ENCODE measurements at regions of chr11 and their contacts with region 1.

Region 1: GRCh38 chr11:18395735-18396504 is 1.6 kb downstream of the LDHA start:
- DNase-seq: peak; percentile 87 to 98 (median 95)
- ATAC-seq: peak; percentile 78
- H3K4me3 ChIP-seq: peak overlapping the region; percentile 78
- H3K4me3 Mint-ChIP-seq: peak overlapping the region; percentile 96 to 99 (median 98)
- H3K27ac ChIP-seq: peak overlapping the region; percentile 95
- H3K27ac Mint-ChIP-seq: peak overlapping the region; percentile 94 to 98 (median 96)
- H3K4me1 ChIP-seq: peaks cover 12 to 14% of the 10 kb centered on the region in 2 donors
- H3K4me1 Mint-ChIP-seq: peaks cover 14 to 63% (median 32%) of the 10 kb centered on the region in 7 donors
- H3K27me3 ChIP-seq: no peaks in the 10 kb centered on the region
- H3K27me3 Mint-ChIP-seq: no peaks in the 10 kb centered on the region

Region 2: GRCh38 chr11:17276236-17277023 is 1119.5 kb before region 1 on chr11 and contains the start of gene NUCB2:
- CTCF ChIA-PET with region 1: no interaction called
- POLR2A ChIA-PET with region 1: no interaction called
- intact Hi-C with region 1: loop called in 1 of 2 experiments (anchors 5 kb)
- DNase-seq: peak; percentile 92 to 98 (median 95)
- ATAC-seq: peak; percentile 96
- H3K4me3 ChIP-seq: peak within 1 kb of the TSS; percentile 78
- H3K4me3 Mint-ChIP-seq: peak within 1 kb of the TSS; percentile 83 to 99 (median 93)
- H3K27ac ChIP-seq: peak within 1 kb of the TSS; percentile 90
- H3K27ac Mint-ChIP-seq: peak within 1 kb of the TSS; percentile 88 to 93 (median 91)
- H3K4me1 ChIP-seq: peaks cover 17 to 28% of the 10 kb centered on the region in 2 donors
- H3K4me1 Mint-ChIP-seq: peaks cover 19 to 48% (median 38%) of the 10 kb centered on the region in 7 donors
- H3K27me3 ChIP-seq: no peaks in the 10 kb centered on the region
- H3K27me3 Mint-ChIP-seq: no peaks in the 10 kb centered on the region
- total RNA-seq, gene NUCB2: 72.0 to 171 (median 145) TPM

Region 3: GRCh38 chr11:18243783-18244362 is 152.0 kb before region 1 on chr11:
- CTCF ChIA-PET with region 1: no interaction called
- POLR2A ChIA-PET with region 1: no interaction called
- intact Hi-C with region 1: loop called in 1 of 2 experiments (anchors 1 kb)
- DNase-seq: peak in 8 of 9 donors; percentile 15 to 63 (median 50)
- ATAC-seq: peak; percentile 80
- H3K4me3 ChIP-seq: no peak overlapping the region
- H3K4me3 Mint-ChIP-seq: no peak overlapping the region
- H3K27ac ChIP-seq: no peak overlapping the region
- H3K27ac Mint-ChIP-seq: no peak overlapping the region
- H3K4me1 ChIP-seq: no peaks in the 10 kb centered on the region
- H3K4me1 Mint-ChIP-seq: peaks cover 0 to 32% (median 0%) of the 10 kb centered on the region in 7 donors
- H3K27me3 ChIP-seq: no peaks in the 10 kb centered on the region
- H3K27me3 Mint-ChIP-seq: peaks cover 6 to 37% (median 16%) of the 10 kb centered on the region in 5 donors

Region 4: DNA sequence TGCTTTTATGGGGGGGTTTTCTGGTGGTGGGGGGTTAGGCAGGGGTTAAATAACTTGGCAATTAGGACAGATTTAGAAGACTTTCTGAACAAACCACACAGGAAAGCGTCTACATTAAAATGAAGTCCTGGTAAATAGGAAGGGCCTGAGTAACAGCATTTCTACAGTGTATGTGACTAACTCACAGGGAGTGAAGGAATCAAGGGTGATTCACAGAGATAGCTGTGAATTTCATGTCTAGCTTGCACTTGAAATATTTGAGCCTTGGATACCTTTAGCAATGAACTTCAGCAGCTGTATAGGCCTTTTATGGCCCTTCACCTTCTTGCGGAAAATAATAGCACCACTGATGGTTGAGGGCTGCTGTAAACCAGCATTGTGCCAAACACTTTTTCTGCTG is 27.7 kb before region 1 on chr11:
- CTCF ChIA-PET with region 1: no interaction called
- POLR2A ChIA-PET with region 1: interaction called, 18 read pairs
- intact Hi-C with region 1: loop called in 1 of 2 experiments (anchors 1 kb)
- DNase-seq: no peak
- ATAC-seq: no peak
- H3K4me3 ChIP-seq: no peak overlapping the region
- H3K4me3 Mint-ChIP-seq: no peak overlapping the region
- H3K27ac ChIP-seq: no peak overlapping the region
- H3K27ac Mint-ChIP-seq: peak overlapping the region in 7 of 9 donors; percentile 0 to 82 (median 63)
- H3K4me1 ChIP-seq: no peaks in the 10 kb centered on the region
- H3K4me1 Mint-ChIP-seq: peaks cover 0 to 22% (median 6%) of the 10 kb centered on the region in 7 donors
- H3K27me3 ChIP-seq: no peaks in the 10 kb centered on the region
- H3K27me3 Mint-ChIP-seq: no peaks in the 10 kb centered on the region

Region 5: GRCh38 chr11:18485913-18486528 is 90.1 kb after region 1 on chr11:
- CTCF ChIA-PET with region 1: no interaction called
- POLR2A ChIA-PET with region 1: no interaction called
- intact Hi-C with region 1: no loop called
- DNase-seq: no peak
- ATAC-seq: no peak
- H3K4me3 ChIP-seq: no peak overlapping the region
- H3K4me3 Mint-ChIP-seq: no peak overlapping the region
- H3K27ac ChIP-seq: no peak overlapping the region
- H3K27ac Mint-ChIP-seq: peak overlapping the region in 2 of 9 donors; percentile 41 to 78
- H3K4me1 ChIP-seq: no peaks in the 10 kb centered on the region
- H3K4me1 Mint-ChIP-seq: peaks cover 0 to 17% (median 4%) of the 10 kb centered on the region in 7 donors
- H3K27me3 ChIP-seq: no peaks in the 10 kb centered on the region
- H3K27me3 Mint-ChIP-seq: no peaks in the 10 kb centered on the region

Region 6: GRCh38 chr11:18698341-18699268 is 302.7 kb after region 1 on chr11 and contains the start of gene TMEM86A:
- CTCF ChIA-PET with region 1: no interaction called
- POLR2A ChIA-PET with region 1: no interaction called
- intact Hi-C with region 1: loop called in 1 of 2 experiments (anchors 1 kb)
- DNase-seq: peak; percentile 81 to 89 (median 87)
- ATAC-seq: peak; percentile 97
- H3K4me3 ChIP-seq: peak within 1 kb of the TSS; percentile 42
- H3K4me3 Mint-ChIP-seq: peak within 1 kb of the TSS; percentile 76 to 89 (median 84)
- H3K27ac ChIP-seq: peak within 1 kb of the TSS; percentile 72
- H3K27ac Mint-ChIP-seq: peak within 1 kb of the TSS; percentile 42 to 95 (median 89)
- H3K4me1 ChIP-seq: peaks cover 6% of the 10 kb centered on the region in 2 donors
- H3K4me1 Mint-ChIP-seq: peaks cover 14 to 27% (median 20%) of the 10 kb centered on the region in 7 donors
- H3K27me3 ChIP-seq: no peaks in the 10 kb centered on the region
- H3K27me3 Mint-ChIP-seq: peaks cover 0 to 39% (median 0%) of the 10 kb centered on the region in 5 donors
- total RNA-seq, gene TMEM86A: 0.53 to 6.5 (median 5.5) TPM

Region 7: GRCh38 chr11:19712281-19713220 is 1316.6 kb after region 1 on chr11 and contains the start of gene NAV2:
- CTCF ChIA-PET with region 1: no interaction called
- POLR2A ChIA-PET with region 1: no interaction called
- intact Hi-C with region 1: loop called in 1 of 2 experiments (anchors 10 kb)
- DNase-seq: peak; percentile 43 to 80 (median 62)
- ATAC-seq: peak; percentile 98
- H3K4me3 ChIP-seq: peak within 1 kb of the TSS; percentile 81
- H3K4me3 Mint-ChIP-seq: peak within 1 kb of the TSS; percentile 91 to 98 (median 94)
- H3K27ac ChIP-seq: peak within 1 kb of the TSS; percentile 24
- H3K27ac Mint-ChIP-seq: peak within 1 kb of the TSS; percentile 63 to 87 (median 77)
- H3K4me1 ChIP-seq: peaks cover 14 to 18% of the 10 kb centered on the region in 2 donors
- H3K4me1 Mint-ChIP-seq: peaks cover 6 to 27% (median 24%) of the 10 kb centered on the region in 7 donors
- H3K27me3 ChIP-seq: peaks cover 14% of the 10 kb centered on the region in 2 donors
- H3K27me3 Mint-ChIP-seq: peaks cover 23 to 69% (median 33%) of the 10 kb centered on the region in 5 donors
- total RNA-seq, gene NAV2: 0.24 to 2.2 (median 0.48) TPM